ENCODE measurements at regions of chr20 and their contacts with region 1.

Region 1: DNA sequence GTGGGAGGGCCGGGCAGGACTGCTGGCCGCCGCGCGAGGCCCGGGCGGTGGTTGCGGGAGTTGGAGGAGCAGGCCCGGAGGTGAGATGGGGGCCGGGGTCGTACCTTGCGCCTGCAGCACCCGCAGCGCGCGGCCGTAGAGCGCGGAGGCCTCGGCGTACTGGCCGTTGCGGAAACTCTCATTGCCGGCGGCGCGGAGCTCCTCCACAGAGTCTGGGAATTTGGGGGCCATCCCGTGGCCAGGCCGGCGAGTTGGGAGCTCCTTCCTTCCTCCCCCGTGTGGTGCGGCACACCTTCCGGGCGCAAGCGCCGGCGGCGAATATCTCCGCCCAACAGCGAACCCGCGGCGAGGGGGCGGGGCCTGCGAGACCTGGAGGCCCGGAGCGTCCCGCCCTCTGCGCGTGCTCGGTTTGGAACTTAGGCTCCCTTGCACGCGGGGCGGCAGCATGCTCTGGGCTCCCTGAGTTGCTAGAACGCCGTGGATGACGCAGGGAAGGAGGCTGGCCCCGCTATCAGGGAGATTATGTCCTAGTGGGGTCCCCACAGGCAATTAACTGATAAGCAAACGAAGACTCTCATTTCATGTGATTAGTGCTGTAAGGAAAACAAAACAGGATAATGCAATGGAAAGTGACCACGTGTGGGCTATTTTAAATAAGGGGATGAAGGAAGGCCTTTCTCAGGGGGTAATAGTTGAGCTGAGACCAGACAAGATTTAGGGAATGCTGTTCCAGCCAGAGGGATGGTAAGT is at the start of gene TOMM34:
- DNase-seq: peak; percentile 95
- H3K4me3 Mint-ChIP-seq: peak within 1 kb of the TSS; percentile 97
- H3K27ac Mint-ChIP-seq: peak within 1 kb of the TSS; percentile 92
- H3K4me1 Mint-ChIP-seq: peaks cover 76% of the 10 kb centered on the region
- H3K27me3 Mint-ChIP-seq: no peaks in the 10 kb centered on the region
- total RNA-seq, gene TOMM34: 21.4 to 23.3 TPM

Region 2: GRCh38 chr20:44948107-44948506 is 12.2 kb before region 1 on chr20:
- CTCF ChIA-PET with region 1: interaction called, 20 read pairs
- POLR2A ChIA-PET with region 1: no interaction called
- DNase-seq: no peak
- H3K4me3 Mint-ChIP-seq: no peak overlapping the region
- H3K27ac Mint-ChIP-seq: no peak overlapping the region
- H3K4me1 Mint-ChIP-seq: peaks cover 10% of the 10 kb centered on the region
- H3K27me3 Mint-ChIP-seq: no peaks in the 10 kb centered on the region